ENCODE measurements at regions of chr15 and their contacts with region 1.

Region 1: GRCh38 chr15:84658080-84658787 is at the start of gene NMB:
- DNase-seq: peak; percentile 70 to 94 (median 82)
- ATAC-seq: peak; percentile 70
- H3K4me3 ChIP-seq: peak within 1 kb of the TSS; percentile 61
- H3K4me3 Mint-ChIP-seq: peak within 1 kb of the TSS; percentile 86
- H3K27ac ChIP-seq: peak within 1 kb of the TSS in 1 of 2 donors; percentile 65
- H3K27ac Mint-ChIP-seq: peak within 1 kb of the TSS; percentile 73
- H3K4me1 ChIP-seq: peaks cover 42% of the 10 kb centered on the region
- H3K4me1 Mint-ChIP-seq: peaks cover 43% of the 10 kb centered on the region
- H3K27me3 ChIP-seq: no peaks in the 10 kb centered on the region
- H3K27me3 Mint-ChIP-seq: no peaks in the 10 kb centered on the region
- CTCF ChIP-seq: peak; percentile 68
- total RNA-seq, gene NMB: 2.2 to 3.7 TPM

Region 2: GRCh38 chr15:84588053-84588874 is 70.0 kb before region 1 on chr15:
- CTCF ChIA-PET with region 1: interaction called, 8 read pairs
- POLR2A ChIA-PET with region 1: interaction called, 6 read pairs
- intact Hi-C with region 1: loop called (anchors 2 to 5 kb)
- DNase-seq: peak; percentile 74 to 91 (median 82)
- ATAC-seq: peak; percentile 100
- H3K4me3 ChIP-seq: no peak overlapping the region
- H3K4me3 Mint-ChIP-seq: no peak overlapping the region
- H3K27ac ChIP-seq: no peak overlapping the region
- H3K27ac Mint-ChIP-seq: no peak overlapping the region
- H3K4me1 ChIP-seq: peaks cover 8% of the 10 kb centered on the region
- H3K4me1 Mint-ChIP-seq: peaks cover 5% of the 10 kb centered on the region
- H3K27me3 ChIP-seq: peaks cover 0 to 3% of the 10 kb centered on the region in 2 experiments
- H3K27me3 Mint-ChIP-seq: no peaks in the 10 kb centered on the region
- CTCF ChIP-seq: peak; percentile 85

Region 3: DNA sequence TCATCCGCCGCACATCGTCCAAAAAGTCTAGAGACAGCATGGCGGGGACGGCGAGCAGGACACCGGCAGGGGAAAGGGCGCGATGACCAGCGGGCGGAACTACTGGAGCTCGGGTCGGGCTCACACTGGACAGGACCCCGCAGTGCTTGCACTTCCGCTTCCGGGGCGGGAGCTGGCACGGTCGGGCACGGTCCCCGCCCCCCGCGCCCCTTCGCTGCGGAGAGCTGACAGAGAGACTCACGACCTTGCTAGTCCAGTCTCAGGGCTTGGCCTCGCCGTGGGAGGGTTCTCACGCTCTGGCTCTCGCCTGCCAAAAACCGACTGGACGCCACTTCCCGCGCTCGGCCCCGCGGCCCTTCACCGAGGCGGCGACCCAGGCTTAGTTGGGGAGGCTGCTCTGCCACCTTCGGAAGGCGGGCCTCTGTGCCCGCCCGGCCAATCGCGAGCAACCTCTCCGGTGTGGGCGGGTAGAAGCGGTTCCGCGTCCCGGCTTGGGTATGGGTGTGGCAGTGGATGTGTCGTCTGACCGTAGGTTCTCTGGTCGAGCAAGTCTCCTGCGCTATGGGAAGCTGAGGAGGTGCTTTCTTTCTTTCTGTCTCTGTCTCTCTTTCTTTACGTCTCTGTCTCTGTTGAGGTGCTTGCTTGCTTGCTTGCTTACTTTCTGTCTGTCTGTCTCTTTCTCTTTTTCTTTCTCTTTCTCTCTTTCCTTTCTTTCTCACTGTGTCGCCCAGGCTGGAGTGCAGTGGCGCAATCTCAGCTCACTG is 58.0 kb after region 1 on chr15 and contains the start of gene SEC11A:
- CTCF ChIA-PET with region 1: interaction called, 13 read pairs
- POLR2A ChIA-PET with region 1: interaction called, 48 read pairs
- intact Hi-C with region 1: loop called (anchors 2 kb)
- DNase-seq: peak; percentile 83 to 95 (median 89)
- ATAC-seq: peak; percentile 95
- H3K4me3 ChIP-seq: peak within 1 kb of the TSS; percentile 99
- H3K4me3 Mint-ChIP-seq: peak within 1 kb of the TSS; percentile 93
- H3K27ac ChIP-seq: peak within 1 kb of the TSS; percentile 70 to 74
- H3K27ac Mint-ChIP-seq: peak within 1 kb of the TSS; percentile 95
- H3K4me1 ChIP-seq: peaks cover 46% of the 10 kb centered on the region
- H3K4me1 Mint-ChIP-seq: peaks cover 60% of the 10 kb centered on the region
- H3K27me3 ChIP-seq: no peaks in the 10 kb centered on the region
- H3K27me3 Mint-ChIP-seq: no peaks in the 10 kb centered on the region
- CTCF ChIP-seq: no peak
- total RNA-seq, gene SEC11A: 44.1 to 47.0 TPM

Region 4: DNA sequence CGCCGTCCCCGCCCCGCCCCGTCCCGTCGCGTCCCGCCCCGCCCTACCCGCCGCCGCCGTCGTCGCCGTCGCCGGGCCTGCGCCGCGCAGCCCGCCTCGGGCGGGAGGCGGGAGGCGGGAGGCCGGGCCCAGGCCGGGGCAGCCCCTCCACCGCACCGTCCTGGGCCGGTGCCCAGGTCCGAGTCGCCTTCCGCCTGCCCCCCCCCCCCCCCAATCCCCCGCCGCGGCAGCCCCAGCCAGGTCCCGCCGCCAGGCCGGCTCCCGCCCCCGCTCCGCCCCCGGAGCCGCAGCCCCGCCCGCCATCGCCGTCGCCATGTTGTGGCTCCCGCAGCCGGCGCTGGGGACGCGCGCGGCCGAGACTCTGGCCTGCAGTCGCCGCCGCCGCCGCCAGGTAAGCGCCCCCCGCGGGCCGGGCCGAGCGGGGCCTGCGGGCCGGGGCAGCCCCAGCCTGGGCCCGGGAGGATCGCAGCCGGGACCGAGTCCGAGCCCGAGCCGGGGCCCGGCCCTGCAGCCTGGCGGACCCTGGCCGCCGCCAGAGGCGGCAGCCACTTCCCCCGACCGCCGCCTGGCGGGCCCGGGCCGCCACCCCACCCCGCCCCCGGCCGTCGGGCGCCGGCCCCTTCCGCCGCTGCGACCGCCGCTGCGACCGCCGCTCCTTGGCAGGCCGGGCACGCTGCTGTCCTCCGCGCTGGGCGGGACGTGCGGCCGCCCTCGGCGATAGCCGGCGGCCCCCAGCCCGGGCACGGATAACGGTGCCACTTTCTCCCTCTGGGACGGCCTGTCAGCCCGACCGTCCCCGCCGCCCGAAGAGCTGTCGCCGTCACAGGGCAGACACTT is 90.3 kb after region 1 on chr15 and contains the start of gene ZNF592:
- CTCF ChIA-PET with region 1: interaction called, 6 read pairs
- POLR2A ChIA-PET with region 1: interaction called, 17 read pairs
- intact Hi-C with region 1: loop called (anchors 1 kb)
- DNase-seq: peak; percentile 64 to 92 (median 78)
- ATAC-seq: peak; percentile 65
- H3K4me3 ChIP-seq: peak within 1 kb of the TSS; percentile 94
- H3K4me3 Mint-ChIP-seq: peak within 1 kb of the TSS; percentile 98
- H3K27ac ChIP-seq: peak within 1 kb of the TSS; percentile 75 to 96
- H3K27ac Mint-ChIP-seq: peak within 1 kb of the TSS; percentile 97
- H3K4me1 ChIP-seq: peaks cover 54% of the 10 kb centered on the region
- H3K4me1 Mint-ChIP-seq: peaks cover 70% of the 10 kb centered on the region
- H3K27me3 ChIP-seq: no peaks in the 10 kb centered on the region
- H3K27me3 Mint-ChIP-seq: no peaks in the 10 kb centered on the region
- CTCF ChIP-seq: no peak
- total RNA-seq, gene ZNF592: 37.5 to 38.2 TPM

Region 5: DNA sequence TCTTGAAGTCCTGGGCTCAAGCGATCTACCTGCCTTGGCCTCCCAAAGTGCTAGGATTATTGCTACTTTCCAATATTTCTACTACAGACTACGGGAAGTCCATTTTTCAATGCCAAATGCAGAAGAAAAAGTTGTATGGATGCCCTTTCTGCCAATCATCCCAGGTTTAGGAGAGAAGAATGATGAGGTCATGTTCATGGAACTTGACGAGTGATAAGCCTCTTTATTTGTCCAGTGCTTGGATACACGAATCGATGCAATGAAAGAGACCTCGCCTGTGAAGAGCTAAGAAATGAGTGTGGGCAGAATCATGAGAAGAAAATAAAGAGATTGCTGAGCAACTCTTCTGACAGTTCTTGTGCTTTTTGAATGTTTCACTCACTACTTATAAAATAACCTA is 225.2 kb after region 1 on chr15:
- CTCF ChIA-PET with region 1: no interaction called
- POLR2A ChIA-PET with region 1: no interaction called
- intact Hi-C with region 1: loop called (anchors 1 to 2 kb)
- DNase-seq: no peak
- ATAC-seq: no peak
- H3K4me3 ChIP-seq: no peak overlapping the region
- H3K4me3 Mint-ChIP-seq: no peak overlapping the region
- H3K27ac ChIP-seq: no peak overlapping the region
- H3K27ac Mint-ChIP-seq: no peak overlapping the region
- H3K4me1 ChIP-seq: no peaks in the 10 kb centered on the region
- H3K4me1 Mint-ChIP-seq: no peaks in the 10 kb centered on the region
- H3K27me3 ChIP-seq: no peaks in the 10 kb centered on the region
- H3K27me3 Mint-ChIP-seq: no peaks in the 10 kb centered on the region
- CTCF ChIP-seq: no peak

Region 6: DNA sequence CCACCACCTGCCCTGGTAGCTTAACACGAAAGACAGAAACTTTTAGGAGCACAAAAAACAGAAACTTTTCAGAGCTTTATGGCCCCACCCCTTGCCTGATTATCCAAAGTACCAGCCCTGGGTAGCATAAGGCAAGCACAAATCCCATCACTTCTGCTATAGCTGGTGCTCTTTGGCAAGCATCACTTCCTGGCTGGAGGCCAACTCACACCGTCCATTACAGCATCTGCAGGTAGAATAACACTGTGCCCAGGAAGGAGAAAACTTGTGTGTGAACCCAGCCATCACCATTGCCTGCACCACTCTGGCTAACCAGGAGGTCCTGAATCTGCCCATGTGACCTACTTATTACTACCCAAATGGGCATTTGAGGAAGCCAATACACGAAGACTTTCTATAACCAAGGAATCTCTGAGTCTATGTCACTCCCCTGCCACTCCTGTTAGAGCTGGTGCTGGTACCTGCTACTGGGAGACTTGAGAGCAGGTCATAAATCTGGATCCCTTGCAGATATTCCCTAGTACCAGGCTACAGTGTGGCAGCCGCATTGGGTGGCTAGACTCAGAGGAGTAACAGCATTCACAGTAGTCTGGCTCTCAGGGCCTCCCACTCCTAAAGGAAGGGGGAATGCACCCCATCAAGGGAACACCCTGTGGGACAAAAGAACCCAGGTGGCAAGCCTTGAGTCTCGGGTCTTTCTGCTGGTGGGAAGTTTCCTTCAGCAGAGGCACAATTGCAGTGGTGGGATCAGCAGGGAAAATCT is 648.9 kb after region 1 on chr15:
- CTCF ChIA-PET with region 1: no interaction called
- POLR2A ChIA-PET with region 1: no interaction called
- intact Hi-C with region 1: no loop called
- DNase-seq: no peak
- ATAC-seq: no peak
- H3K4me3 ChIP-seq: no peak overlapping the region
- H3K4me3 Mint-ChIP-seq: no peak overlapping the region
- H3K27ac ChIP-seq: no peak overlapping the region
- H3K27ac Mint-ChIP-seq: no peak overlapping the region
- H3K4me1 ChIP-seq: no peaks in the 10 kb centered on the region
- H3K4me1 Mint-ChIP-seq: peaks cover 13% of the 10 kb centered on the region
- H3K27me3 ChIP-seq: no peaks in the 10 kb centered on the region
- H3K27me3 Mint-ChIP-seq: no peaks in the 10 kb centered on the region
- CTCF ChIP-seq: no peak

Region 7: GRCh38 chr15:85794603-85795336 is 1136.5 kb after region 1 on chr15 and contains the start of gene KLHL25:
- CTCF ChIA-PET with region 1: no interaction called
- POLR2A ChIA-PET with region 1: no interaction called
- intact Hi-C with region 1: loop called in 1 of 2 experiments (anchors 10 kb)
- DNase-seq: peak; percentile 84 to 97 (median 92)
- ATAC-seq: peak; percentile 95
- H3K4me3 ChIP-seq: peak within 1 kb of the TSS; percentile 80
- H3K4me3 Mint-ChIP-seq: peak within 1 kb of the TSS; percentile 99
- H3K27ac ChIP-seq: peak within 1 kb of the TSS in 1 of 2 donors; percentile 56
- H3K27ac Mint-ChIP-seq: peak within 1 kb of the TSS; percentile 56
- H3K4me1 ChIP-seq: peaks cover 38% of the 10 kb centered on the region
- H3K4me1 Mint-ChIP-seq: peaks cover 47% of the 10 kb centered on the region
- H3K27me3 ChIP-seq: no peaks in the 10 kb centered on the region
- H3K27me3 Mint-ChIP-seq: no peaks in the 10 kb centered on the region
- CTCF ChIP-seq: no peak
- total RNA-seq, gene KLHL25: 9.0 to 10.2 TPM